ENCODE measurements at regions of chr1 and their contacts with region 1.

Region 1: DNA sequence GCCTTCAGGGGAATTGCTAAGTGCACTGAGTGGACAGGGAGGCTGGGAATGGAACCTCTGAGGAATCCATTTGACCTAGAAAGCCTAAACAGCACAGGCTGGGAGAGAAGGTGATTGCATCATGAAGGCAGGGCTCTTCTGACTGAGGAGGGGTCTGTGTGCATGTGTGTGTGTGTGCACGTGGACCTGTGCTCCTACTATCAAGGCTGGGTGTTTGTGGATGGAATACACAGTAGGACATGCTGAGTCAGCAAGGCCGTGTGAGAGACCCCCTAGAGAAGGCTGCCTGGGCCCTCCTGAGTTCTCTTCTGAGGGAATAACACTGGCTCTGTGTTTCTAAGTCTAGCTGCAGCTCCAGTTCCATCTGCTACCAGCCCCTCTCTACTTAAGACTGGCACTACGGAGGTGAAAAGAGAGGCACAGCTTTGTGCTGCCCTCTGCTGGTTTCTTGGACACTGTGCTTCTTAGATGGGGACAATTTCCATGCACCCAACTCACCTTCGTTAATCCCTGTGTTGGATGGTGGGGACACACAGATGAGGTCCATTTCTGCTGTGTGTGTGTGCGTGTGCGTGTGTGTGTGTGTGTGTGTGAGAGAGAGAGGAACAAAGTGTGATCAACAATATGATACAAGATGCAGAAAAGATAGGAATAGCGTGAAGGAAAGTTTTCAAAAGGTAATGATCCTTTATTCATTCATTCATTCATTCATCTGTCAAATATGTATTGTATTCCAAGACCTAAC is 6.2 kb upstream of the EFCAB14 start:
- H3K4me3 Mint-ChIP-seq: no peak overlapping the region
- H3K27ac Mint-ChIP-seq: no peak overlapping the region
- H3K4me1 Mint-ChIP-seq: peaks cover 7% of the 10 kb centered on the region
- H3K27me3 Mint-ChIP-seq: peaks cover 30% of the 10 kb centered on the region

Region 2: GRCh38 chr1:46622344-46622743 is 102.8 kb before region 1 on chr1:
- intact Hi-C with region 1: loop called (anchors 2 kb)
- H3K4me3 Mint-ChIP-seq: no peak overlapping the region
- H3K27ac Mint-ChIP-seq: peak overlapping the region; percentile 48
- H3K4me1 Mint-ChIP-seq: peaks cover 55% of the 10 kb centered on the region
- H3K27me3 Mint-ChIP-seq: no peaks in the 10 kb centered on the region